ENCODE measurements at regions of chr3 and their contacts with region 1.

Region 1: DNA sequence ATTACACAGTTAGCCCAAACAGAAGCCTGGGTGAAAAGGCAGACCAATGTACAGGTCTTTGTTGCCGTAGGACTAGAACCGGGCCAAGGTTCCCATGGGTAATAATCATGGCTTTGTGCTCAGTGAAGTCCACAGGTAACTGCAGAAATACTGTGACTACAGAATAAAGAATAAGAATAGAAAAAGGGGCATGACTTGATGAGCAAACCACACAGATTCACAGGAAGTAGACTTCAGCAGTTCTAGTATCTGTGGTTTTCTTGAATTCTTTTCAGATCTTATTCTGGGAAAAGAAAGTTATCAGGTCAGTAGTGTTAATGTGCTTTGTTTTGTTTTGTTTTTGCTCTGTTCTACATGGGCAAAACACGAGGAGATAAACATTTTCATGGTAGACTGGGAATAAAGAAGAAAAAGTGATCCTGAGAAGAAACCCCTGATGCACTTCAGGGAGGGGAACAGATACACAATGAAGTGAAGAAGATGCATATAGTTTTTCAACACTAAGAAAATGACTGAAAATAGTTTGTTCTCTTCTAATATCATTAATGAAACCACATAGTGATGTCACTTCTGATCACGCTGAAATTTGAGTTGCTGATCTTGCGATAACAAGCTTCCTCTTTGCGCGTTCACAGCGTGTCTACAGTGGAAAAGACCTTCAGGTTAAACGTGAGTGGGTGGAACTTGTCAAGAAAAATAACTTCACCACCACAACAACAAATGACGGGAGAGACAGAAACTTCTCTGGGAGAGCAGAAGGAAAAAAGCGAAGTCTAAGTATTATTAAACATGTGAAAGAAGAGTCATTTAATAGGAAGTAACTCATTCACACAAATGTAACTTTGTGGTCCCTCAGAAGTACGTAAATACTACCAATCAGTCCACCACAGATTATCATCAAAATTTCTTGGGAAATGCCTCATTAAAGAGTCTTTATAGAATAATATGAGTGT is 315.8 kb upstream of the SATB1 start:
- DNase-seq: peak; percentile 15 to 92 (median 42)
- ATAC-seq: peak; percentile 76
- H3K4me3 ChIP-seq: peak overlapping the region; percentile 28
- H3K4me3 Mint-ChIP-seq: peak overlapping the region; percentile 76
- H3K27ac ChIP-seq: peak overlapping the region; percentile 46 to 87
- H3K27ac Mint-ChIP-seq: peak overlapping the region; percentile 90
- H3K4me1 ChIP-seq: peaks cover 38% of the 10 kb centered on the region
- H3K4me1 Mint-ChIP-seq: peaks cover 87% of the 10 kb centered on the region
- H3K27me3 ChIP-seq: no peaks in the 10 kb centered on the region
- H3K27me3 Mint-ChIP-seq: no peaks in the 10 kb centered on the region
- CTCF ChIP-seq: no peak

Region 2: DNA sequence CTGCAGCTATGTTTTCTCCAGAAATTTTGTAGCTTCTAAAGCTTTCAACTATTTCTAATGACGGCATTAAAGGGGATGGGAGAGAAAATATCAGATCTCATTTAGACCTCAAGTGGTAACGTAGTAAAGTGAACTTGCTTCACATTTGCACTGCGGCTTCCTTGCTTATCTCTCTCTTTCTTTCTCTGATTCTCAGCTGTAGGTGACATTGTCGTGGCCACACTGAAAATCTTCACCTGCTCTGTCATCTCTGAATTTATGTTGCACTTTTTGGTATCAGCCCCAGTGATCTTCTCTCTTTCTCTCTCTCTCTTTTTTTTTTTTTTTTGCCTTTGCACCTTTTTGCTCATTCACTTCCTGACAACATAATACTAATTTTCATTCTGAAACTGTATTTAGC is 61.7 kb before region 1 on chr3:
- CTCF ChIA-PET with region 1: no interaction called
- POLR2A ChIA-PET with region 1: interaction called, 3 read pairs
- intact Hi-C with region 1: loop called in 1 of 2 experiments (anchors 5 kb)
- DNase-seq: peak in 7 of 14 experiments; percentile 3 to 75 (median 39)
- ATAC-seq: peak; percentile 87
- H3K4me3 ChIP-seq: peak overlapping the region; percentile 12
- H3K4me3 Mint-ChIP-seq: peak overlapping the region; percentile 57
- H3K27ac ChIP-seq: peak overlapping the region in 1 of 2 donors; percentile 33
- H3K27ac Mint-ChIP-seq: peak overlapping the region; percentile 73
- H3K4me1 ChIP-seq: peaks cover 13% of the 10 kb centered on the region
- H3K4me1 Mint-ChIP-seq: peaks cover 75% of the 10 kb centered on the region
- H3K27me3 ChIP-seq: no peaks in the 10 kb centered on the region
- H3K27me3 Mint-ChIP-seq: no peaks in the 10 kb centered on the region
- CTCF ChIP-seq: no peak

Region 3: DNA sequence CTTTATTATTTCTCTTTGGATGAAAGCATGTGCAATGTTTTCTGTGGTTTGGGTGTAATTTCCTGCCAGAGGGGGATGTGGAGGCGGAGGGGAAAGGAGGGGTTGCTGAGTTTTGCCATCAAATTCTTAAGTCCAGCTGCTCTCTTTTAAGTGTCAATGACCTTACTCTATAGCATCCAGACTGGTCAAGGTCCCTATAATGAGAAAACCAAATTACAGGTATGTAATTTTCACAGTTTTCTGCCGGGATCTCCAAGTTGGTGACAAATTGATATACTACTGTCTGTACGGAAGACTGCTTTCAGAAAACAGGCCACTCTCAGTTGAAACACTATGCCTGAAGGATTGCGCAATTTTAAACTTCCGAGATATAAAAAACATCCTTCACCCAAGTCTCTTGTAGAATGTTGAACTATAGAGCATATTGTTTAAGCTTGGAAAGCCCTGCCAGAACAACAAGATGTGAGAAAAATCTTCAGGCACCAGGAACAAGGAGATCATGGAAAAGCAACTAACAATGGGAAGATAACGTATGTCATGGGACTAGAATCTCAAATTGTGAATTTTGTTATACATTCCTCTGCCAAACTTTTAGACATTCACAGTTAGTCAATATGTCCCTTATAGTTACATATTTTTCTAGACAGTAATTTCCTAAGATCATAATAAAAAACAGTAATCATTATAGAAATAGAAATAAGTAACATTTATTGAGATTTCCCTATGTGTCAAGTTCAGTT is 15.1 kb before region 1 on chr3:
- CTCF ChIA-PET with region 1: no interaction called
- POLR2A ChIA-PET with region 1: interaction called, 71 read pairs
- intact Hi-C with region 1: loop called in 1 of 2 experiments (anchors 1 kb)
- DNase-seq: peak in 6 of 14 experiments; percentile 16 to 82 (median 54)
- ATAC-seq: peak; percentile 84
- H3K4me3 ChIP-seq: peak overlapping the region; percentile 26
- H3K4me3 Mint-ChIP-seq: peak overlapping the region; percentile 64
- H3K27ac ChIP-seq: peak overlapping the region; percentile 69 to 83
- H3K27ac Mint-ChIP-seq: peak overlapping the region; percentile 87
- H3K4me1 ChIP-seq: peaks cover 55% of the 10 kb centered on the region
- H3K4me1 Mint-ChIP-seq: peaks cover 74% of the 10 kb centered on the region
- H3K27me3 ChIP-seq: no peaks in the 10 kb centered on the region
- H3K27me3 Mint-ChIP-seq: no peaks in the 10 kb centered on the region
- CTCF ChIP-seq: no peak

Measured in CD4-positive, alpha-beta T cell (primary cell).